Activated naive CD4-positive, alpha-beta T cell treated with anti-CD3 and anti-CD28 coated beads for 36 hours (primary cell): ENCODE measurements at regions of chr7 and their contacts with region 1.

Region 1: DNA sequence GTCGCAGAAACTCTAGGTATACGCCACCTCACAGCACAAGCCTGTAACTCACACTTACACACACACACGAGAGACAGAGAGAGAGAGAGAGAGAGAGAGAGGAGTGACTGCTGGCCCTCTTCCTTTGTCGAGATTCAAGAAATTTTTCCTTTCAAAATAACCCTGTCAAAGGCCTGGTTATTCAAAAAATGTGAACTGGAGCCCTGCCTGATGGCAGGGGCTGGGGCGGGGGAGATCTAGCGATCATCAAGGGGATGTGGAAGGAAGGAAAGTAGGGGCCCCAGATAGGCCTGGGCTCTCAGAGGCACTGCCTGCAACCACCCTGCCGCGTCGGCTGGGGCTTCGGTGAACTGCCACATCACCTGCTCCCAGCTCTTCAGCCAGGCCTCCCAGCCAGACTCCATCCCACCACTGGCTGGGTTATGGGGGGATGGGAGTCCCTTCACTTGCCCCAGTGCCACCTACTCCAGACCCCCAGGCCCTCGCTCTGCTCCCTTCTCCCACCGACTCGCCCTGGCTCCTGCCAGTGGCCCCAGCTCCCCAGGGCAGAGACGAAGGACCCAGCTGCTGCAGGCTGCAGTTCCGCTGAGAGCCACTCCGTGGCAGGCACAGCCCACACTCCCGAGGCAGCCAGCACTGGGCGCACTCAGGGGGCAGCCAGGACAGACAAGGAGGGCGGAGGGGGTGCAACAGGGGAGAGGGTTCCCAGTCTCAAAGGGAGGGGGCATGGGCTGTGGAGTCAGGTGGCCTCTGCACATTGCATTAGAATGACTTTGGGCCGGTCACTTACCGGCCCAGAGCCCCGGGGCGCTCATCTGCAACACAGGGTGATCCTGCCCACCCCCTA is 15.3 kb downstream of the KCNH2 start:
- DNase-seq: peak; percentile 68
- H3K4me3 Mint-ChIP-seq: no peak overlapping the region
- H3K27ac Mint-ChIP-seq: no peak overlapping the region
- H3K4me1 Mint-ChIP-seq: peaks cover 14% of the 10 kb centered on the region
- H3K27me3 Mint-ChIP-seq: peaks cover 16% of the 10 kb centered on the region

Region 2: DNA sequence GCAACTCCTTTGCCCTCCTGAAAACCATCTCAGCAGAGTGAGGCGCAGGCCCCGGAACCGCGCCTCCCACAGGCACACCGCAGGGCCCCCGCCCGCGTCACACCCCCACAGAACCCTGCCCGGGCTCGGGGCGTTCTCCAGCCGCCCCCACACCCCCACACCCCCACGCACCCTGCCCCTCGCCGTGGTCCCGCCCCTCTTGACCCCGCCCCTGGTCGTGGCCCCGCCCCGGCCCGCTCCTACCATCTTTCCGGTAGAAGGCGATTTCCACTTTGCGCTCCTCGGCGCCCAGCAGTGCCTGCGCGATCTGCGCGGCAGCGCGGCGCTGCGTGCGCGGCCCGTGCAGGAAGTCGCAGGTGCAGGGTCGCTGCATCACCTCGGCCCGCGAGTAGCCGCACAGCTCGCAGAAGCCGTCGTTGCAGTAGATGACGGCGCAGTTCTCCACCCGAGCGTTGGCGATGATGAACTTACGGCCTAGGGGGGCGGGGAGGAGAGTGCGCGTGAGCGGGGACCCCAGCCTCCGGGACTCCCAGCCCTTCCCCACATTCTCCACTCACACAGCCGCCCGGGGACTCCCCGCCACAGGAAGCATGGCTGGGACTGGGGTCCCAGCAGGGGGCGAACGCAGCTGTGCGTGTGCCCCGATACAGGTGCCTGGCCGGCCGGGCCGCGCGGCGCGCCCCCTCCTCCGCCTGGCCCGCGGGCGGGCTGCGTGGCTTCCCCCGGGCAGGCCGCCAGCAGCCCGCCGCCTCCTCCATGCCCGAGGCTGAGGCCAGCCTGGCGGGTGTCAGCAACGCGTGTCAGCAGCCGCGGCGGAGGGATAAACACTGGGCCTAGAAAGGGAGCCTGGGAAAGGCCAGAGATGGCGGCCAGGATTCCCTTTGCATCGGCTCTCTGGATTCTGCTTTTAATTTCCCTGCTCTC is 12.0 kb after region 1 on chr7:
- CTCF ChIA-PET with region 1: interaction called, 15 read pairs
- intact Hi-C with region 1: no loop called
- DNase-seq: peak; percentile 78
- H3K4me3 Mint-ChIP-seq: peak overlapping the region; percentile 79
- H3K27ac Mint-ChIP-seq: peak overlapping the region; percentile 36
- H3K4me1 Mint-ChIP-seq: peaks cover 27% of the 10 kb centered on the region
- H3K27me3 Mint-ChIP-seq: peaks cover 25% of the 10 kb centered on the region